ENCODE measurements at regions of chr12 and their contacts with region 1.

Region 1: DNA sequence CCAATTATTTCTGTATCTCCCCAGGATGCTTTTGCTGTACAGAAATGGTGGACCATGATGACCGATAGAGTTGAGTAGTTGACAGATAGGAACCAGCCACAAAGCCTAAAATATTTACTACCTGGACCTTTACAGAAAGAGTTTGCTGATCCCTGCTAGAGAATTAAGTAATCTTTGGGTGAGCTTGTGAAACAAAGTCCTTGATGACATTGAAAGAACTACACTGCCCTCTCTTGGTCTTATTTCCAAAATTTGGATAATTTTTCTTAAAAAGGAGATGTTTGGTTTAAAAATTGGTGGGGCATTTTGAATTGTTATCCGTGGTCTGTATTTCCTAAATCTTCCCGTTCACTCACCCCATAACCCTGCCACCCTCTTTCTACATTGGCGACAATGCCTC is 13.7 kb upstream of the TCTN1 start:
- DNase-seq: peak; percentile 30
- H3K4me3 ChIP-seq: no peak overlapping the region
- H3K27ac ChIP-seq: no peak overlapping the region
- H3K4me1 ChIP-seq: no peaks in the 10 kb centered on the region
- H3K27me3 ChIP-seq: no peaks in the 10 kb centered on the region
- CTCF ChIP-seq: peak; percentile 67
- EP300 ChIP-seq: no peak
- RAD21 ChIP-seq: peak; percentile 81

Region 2: GRCh38 chr12:110468212-110469048 is 131.8 kb before region 1 on chr12 and contains the starts of genes FAM216A and GPN3:
- CTCF ChIA-PET with region 1: interaction called, 84 read pairs
- POLR2A ChIA-PET with region 1: interaction called, 7 read pairs
- DNase-seq: peak; percentile 93
- H3K4me3 ChIP-seq: peak within 1 kb of the TSS; percentile 78 to 82
- H3K27ac ChIP-seq: peak within 1 kb of the TSS; percentile 92 to 94
- H3K4me1 ChIP-seq: peaks cover 8% of the 10 kb centered on the region in 2 experiments
- H3K27me3 ChIP-seq: no peaks in the 10 kb centered on the region
- CTCF ChIP-seq: no peak
- EP300 ChIP-seq: no peak; a peak in 2 of 4 replicates
- RAD21 ChIP-seq: no peak
- polyA plus RNA-seq, gene FAM216A: 29.8 and 33.1 TPM in 2 replicates
- polyA plus RNA-seq, gene GPN3: 21.6 and 22.5 TPM in 2 replicates

Region 3: DNA sequence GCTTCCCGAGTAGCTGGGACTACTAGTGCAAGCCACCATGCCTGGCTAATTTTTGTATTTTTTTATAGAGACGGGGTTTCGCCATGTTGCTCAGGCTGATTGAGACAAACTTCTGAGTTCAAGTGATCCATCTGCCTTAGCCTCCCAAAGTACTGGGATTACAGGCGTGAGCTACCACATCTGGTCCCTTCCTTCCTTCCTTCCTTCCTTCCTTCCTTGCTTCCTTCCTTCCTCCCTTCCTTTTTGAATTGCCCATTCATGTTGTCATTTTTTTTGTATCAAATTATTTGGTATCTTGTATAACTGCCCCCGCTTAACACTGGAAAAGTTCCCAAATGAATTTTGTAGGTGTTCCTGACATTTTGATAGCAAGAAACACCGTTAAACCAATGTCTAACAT is 86.4 kb before region 1 on chr12:
- CTCF ChIA-PET with region 1: interaction called, 55 read pairs
- POLR2A ChIA-PET with region 1: no interaction called
- DNase-seq: no peak
- H3K4me3 ChIP-seq: no peak overlapping the region
- H3K27ac ChIP-seq: no peak overlapping the region
- H3K4me1 ChIP-seq: no peaks in the 10 kb centered on the region
- H3K27me3 ChIP-seq: no peaks in the 10 kb centered on the region
- CTCF ChIP-seq: no peak
- EP300 ChIP-seq: no peak
- RAD21 ChIP-seq: no peak

Region 4: GRCh38 chr12:110565919-110566871 is 34.1 kb before region 1 on chr12:
- CTCF ChIA-PET with region 1: interaction called, 12 read pairs
- POLR2A ChIA-PET with region 1: no interaction called
- DNase-seq: no peak
- H3K4me3 ChIP-seq: no peak overlapping the region
- H3K27ac ChIP-seq: peak overlapping the region in 1 of 2 experiments; percentile 16; a peak in 1 of 4 replicates
- H3K4me1 ChIP-seq: peaks cover 3 to 20% of the 10 kb centered on the region in 2 experiments; a peak in 2 of 4 replicates
- H3K27me3 ChIP-seq: no peaks in the 10 kb centered on the region
- CTCF ChIP-seq: no peak
- EP300 ChIP-seq: no peak
- RAD21 ChIP-seq: no peak

Region 5: GRCh38 chr12:110583137-110584059 is 16.9 kb before region 1 on chr12 and contains the start of gene PPTC7:
- CTCF ChIA-PET with region 1: interaction called, 14 read pairs
- POLR2A ChIA-PET with region 1: no interaction called
- DNase-seq: peak; percentile 95
- H3K4me3 ChIP-seq: peak within 1 kb of the TSS; percentile 76 to 77
- H3K27ac ChIP-seq: peak within 1 kb of the TSS; percentile 54 to 61
- H3K4me1 ChIP-seq: peaks cover 3 to 9% of the 10 kb centered on the region in 2 experiments; a peak in 3 of 4 replicates
- H3K27me3 ChIP-seq: no peaks in the 10 kb centered on the region
- CTCF ChIP-seq: no peak
- EP300 ChIP-seq: no peak
- RAD21 ChIP-seq: no peak
- polyA plus RNA-seq, gene PPTC7: 9.6 and 14.0 TPM in 2 replicates

Region 6: GRCh38 chr12:110733089-110733715 is 132.9 kb after region 1 on chr12:
- CTCF ChIA-PET with region 1: no interaction called
- POLR2A ChIA-PET with region 1: no interaction called
- DNase-seq: no peak
- H3K4me3 ChIP-seq: no peak overlapping the region
- H3K27ac ChIP-seq: peak overlapping the region; percentile 3 to 7; a peak in 1 of 4 replicates
- H3K4me1 ChIP-seq: peaks cover 7 to 26% of the 10 kb centered on the region in 2 experiments
- H3K27me3 ChIP-seq: no peaks in the 10 kb centered on the region
- CTCF ChIP-seq: no peak
- EP300 ChIP-seq: no peak
- RAD21 ChIP-seq: no peak

Region 7: GRCh38 chr12:110888256-110888991 is 288.2 kb after region 1 on chr12:
- CTCF ChIA-PET with region 1: interaction called, 15 read pairs
- POLR2A ChIA-PET with region 1: no interaction called
- DNase-seq: no peak
- H3K4me3 ChIP-seq: peak overlapping the region in 1 of 2 experiments; percentile 60; a peak in 1 of 4 replicates
- H3K27ac ChIP-seq: no peak overlapping the region
- H3K4me1 ChIP-seq: no peaks in the 10 kb centered on the region; a peak in 1 of 4 replicates
- H3K27me3 ChIP-seq: no peaks in the 10 kb centered on the region
- CTCF ChIP-seq: no peak
- EP300 ChIP-seq: no peak
- RAD21 ChIP-seq: no peak

Region 8: DNA sequence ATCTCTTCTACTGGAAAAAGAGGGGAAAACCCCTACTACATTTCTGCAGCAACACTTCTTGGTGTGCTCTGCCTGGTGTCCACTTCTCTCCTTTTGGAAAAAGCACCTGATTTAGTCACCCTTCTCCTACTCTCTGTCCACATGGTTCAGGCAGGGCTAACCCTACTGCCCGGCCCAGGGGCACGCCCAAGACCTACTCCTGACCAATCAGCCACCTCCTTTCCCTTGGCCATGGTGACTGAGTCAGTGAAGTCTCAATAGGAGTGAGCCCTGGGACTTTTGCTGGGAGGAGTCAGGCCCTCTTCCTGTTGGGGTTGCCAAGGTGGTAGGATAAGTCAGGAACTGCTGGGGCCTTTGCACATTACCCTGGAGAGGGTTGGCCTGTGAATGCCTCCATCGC is 372.6 kb after region 1 on chr12:
- CTCF ChIA-PET with region 1: no interaction called
- POLR2A ChIA-PET with region 1: no interaction called
- DNase-seq: no peak
- H3K4me3 ChIP-seq: no peak overlapping the region
- H3K27ac ChIP-seq: no peak overlapping the region
- H3K4me1 ChIP-seq: peaks cover 0 to 4% of the 10 kb centered on the region in 2 experiments; a peak in 1 of 4 replicates
- H3K27me3 ChIP-seq: no peaks in the 10 kb centered on the region
- CTCF ChIP-seq: no peak
- EP300 ChIP-seq: no peak
- RAD21 ChIP-seq: no peak

Region 9: GRCh38 chr12:111396726-111397445 is 796.6 kb after region 1 on chr12:
- CTCF ChIA-PET with region 1: no interaction called
- POLR2A ChIA-PET with region 1: no interaction called
- DNase-seq: peak; percentile 92
- H3K4me3 ChIP-seq: peak overlapping the region; percentile 30 to 63
- H3K27ac ChIP-seq: no peak overlapping the region; a peak in 1 of 4 replicates
- H3K4me1 ChIP-seq: peaks cover 0 to 9% of the 10 kb centered on the region in 2 experiments; a peak in 2 of 4 replicates
- H3K27me3 ChIP-seq: no peaks in the 10 kb centered on the region
- CTCF ChIP-seq: peak; percentile 97
- EP300 ChIP-seq: peak in 1 of 2 experiments; percentile 8; a peak in 1 of 4 replicates
- RAD21 ChIP-seq: peak; percentile 91